K562 (cell line): ENCODE measurements at regions of chr12 and their contacts with region 1.

Region 1: GRCh38 chr12:120228291-120229070 is 27.6 kb upstream of the RPLP0 start:
- DNase-seq: peak; percentile 86 to 92 (median 86)
- ATAC-seq: peak; percentile 78
- H3K4me3 ChIP-seq: peak overlapping the region; percentile 2; the same call in 1 of the 2 replicates
- H3K27ac ChIP-seq: peak overlapping the region; percentile 96; the same call in 2 of the 3 replicates
- H3K4me1 ChIP-seq: peaks cover 74 to 80% of the 10 kb centered on the region in 2 experiments
- H3K27me3 ChIP-seq: no peaks in the 10 kb centered on the region
- CTCF ChIP-seq: peak; percentile 95 to 96 (median 95)
- EP300 ChIP-seq: peak; percentile 38
- POLR2A ChIP-seq: no peak
- RAD21 ChIP-seq: peak; percentile 98 to 99

Region 2: GRCh38 chr12:120075034-120075616 is 153.4 kb before region 1 on chr12:
- CTCF ChIA-PET with region 1: no interaction called
- POLR2A ChIA-PET with region 1: no interaction called
- in situ Hi-C with region 1: no loop called
- intact Hi-C with region 1: no loop called
- DNase-seq: no peak
- ATAC-seq: no peak
- H3K4me3 ChIP-seq: no peak overlapping the region
- H3K27ac ChIP-seq: no peak overlapping the region
- H3K4me1 ChIP-seq: no peaks in the 10 kb centered on the region; a peak in 1 of 5 replicates
- H3K27me3 ChIP-seq: peaks cover 40 to 72% of the 10 kb centered on the region in 2 experiments
- CTCF ChIP-seq: no peak
- EP300 ChIP-seq: no peak
- POLR2A ChIP-seq: no peak
- RAD21 ChIP-seq: no peak

Region 3: GRCh38 chr12:120242275-120242799 is 13.9 kb after region 1 on chr12:
- CTCF ChIA-PET with region 1: no interaction called
- POLR2A ChIA-PET with region 1: interaction called, 35 read pairs
- in situ Hi-C with region 1: no loop called
- intact Hi-C with region 1: loop called (anchors 1 kb)
- DNase-seq: peak; percentile 76 to 95 (median 86)
- ATAC-seq: peak; percentile 97
- H3K4me3 ChIP-seq: no peak overlapping the region
- H3K27ac ChIP-seq: no peak overlapping the region
- H3K4me1 ChIP-seq: peaks cover 30 to 31% of the 10 kb centered on the region in 2 experiments
- H3K27me3 ChIP-seq: no peaks in the 10 kb centered on the region
- CTCF ChIP-seq: no peak
- EP300 ChIP-seq: peak; percentile 85
- POLR2A ChIP-seq: no peak
- RAD21 ChIP-seq: peak in 1 of 2 experiments; percentile 37; a peak in 2 of 4 replicates

Region 4: DNA sequence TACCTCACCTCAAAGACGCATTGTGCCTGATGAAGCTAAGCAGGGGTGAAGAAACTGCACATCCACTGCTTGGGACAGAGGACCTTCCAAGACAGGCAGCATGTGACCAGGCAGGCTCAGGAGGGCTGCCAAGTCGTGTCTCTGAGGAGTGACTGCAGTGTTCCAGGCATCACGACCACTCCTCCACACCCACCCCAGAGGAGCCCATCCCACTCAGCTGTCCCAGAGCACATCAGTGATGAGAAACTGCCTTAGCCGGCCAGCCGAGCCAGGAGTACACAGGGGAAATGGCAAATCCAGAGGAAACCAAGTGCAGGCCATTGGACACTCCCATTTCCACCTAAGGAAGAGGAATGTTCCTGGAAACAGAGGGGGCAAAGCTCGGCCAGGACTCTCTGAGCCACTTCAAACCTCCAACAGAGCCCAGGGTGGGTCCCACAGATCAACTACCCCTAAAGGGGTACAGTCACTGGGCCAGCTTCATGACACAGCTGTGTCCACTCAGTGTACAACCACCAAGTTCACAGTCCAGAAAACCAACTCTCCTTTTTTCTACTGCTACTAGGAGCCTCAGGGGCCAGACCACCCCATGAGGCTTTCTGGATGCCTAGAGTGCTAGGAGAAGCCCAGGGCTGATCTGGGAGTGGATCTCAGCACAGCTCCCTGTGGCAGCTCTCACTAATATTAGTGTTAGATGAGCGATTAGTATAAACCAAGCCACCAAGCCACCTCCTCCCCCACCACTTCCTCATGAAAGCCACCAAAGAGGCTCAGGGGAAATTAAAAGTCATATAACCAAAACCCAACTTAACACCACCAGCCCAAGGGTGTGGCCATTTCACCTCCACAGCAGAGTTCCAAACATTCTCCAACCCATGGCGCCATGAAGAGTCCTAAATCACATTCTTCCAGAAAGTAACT is 21.7 kb after region 1 on chr12:
- CTCF ChIA-PET with region 1: no interaction called
- POLR2A ChIA-PET with region 1: interaction called, 35 read pairs
- in situ Hi-C with region 1: no loop called
- intact Hi-C with region 1: no loop called
- DNase-seq: no peak
- ATAC-seq: peak; percentile 16; the same call in 2 of the 3 replicates
- H3K4me3 ChIP-seq: no peak overlapping the region
- H3K27ac ChIP-seq: no peak overlapping the region
- H3K4me1 ChIP-seq: peaks cover 30 to 38% of the 10 kb centered on the region in 2 experiments
- H3K27me3 ChIP-seq: no peaks in the 10 kb centered on the region
- CTCF ChIP-seq: no peak
- EP300 ChIP-seq: no peak
- POLR2A ChIP-seq: no peak
- RAD21 ChIP-seq: no peak

Region 5: GRCh38 chr12:120265473-120266179 is 37.1 kb after region 1 on chr12 and contains the start of gene PXN:
- CTCF ChIA-PET with region 1: interaction called, 35 read pairs
- POLR2A ChIA-PET with region 1: interaction called, 39 read pairs
- in situ Hi-C with region 1: loop called (anchors 5 kb)
- intact Hi-C with region 1: loop called (anchors 1 kb)
- DNase-seq: peak; percentile 88 to 99 (median 98)
- ATAC-seq: peak; percentile 95
- H3K4me3 ChIP-seq: peak within 1 kb of the TSS; percentile 70
- H3K27ac ChIP-seq: peak within 1 kb of the TSS; percentile 76
- H3K4me1 ChIP-seq: peaks cover 37% of the 10 kb centered on the region in 2 experiments; a peak in 4 of 5 replicates
- H3K27me3 ChIP-seq: no peaks in the 10 kb centered on the region
- CTCF ChIP-seq: peak; percentile 68 to 92 (median 86)
- EP300 ChIP-seq: no peak
- POLR2A ChIP-seq: peak; percentile 60
- RAD21 ChIP-seq: peak; percentile 91 to 94
- polyA plus RNA-seq, gene PXN: 4.0 to 4.8 TPM

Region 6: GRCh38 chr12:120317224-120318105 is 89.0 kb after region 1 on chr12:
- CTCF ChIA-PET with region 1: no interaction called
- POLR2A ChIA-PET with region 1: interaction called, 4 read pairs
- in situ Hi-C with region 1: no loop called
- intact Hi-C with region 1: loop called (anchors 1 kb)
- DNase-seq: peak; percentile 99 to 100 (median 99)
- ATAC-seq: peak; percentile 99
- H3K4me3 ChIP-seq: peak overlapping the region; percentile 48
- H3K27ac ChIP-seq: peak overlapping the region; percentile 85
- H3K4me1 ChIP-seq: peaks cover 3 to 10% of the 10 kb centered on the region in 2 experiments; a peak in 4 of 5 replicates
- H3K27me3 ChIP-seq: no peaks in the 10 kb centered on the region
- CTCF ChIP-seq: peak; percentile 74 to 94 (median 85)
- EP300 ChIP-seq: no peak
- POLR2A ChIP-seq: peak; percentile 93
- RAD21 ChIP-seq: peak in 1 of 2 experiments; percentile 49; a peak in 2 of 4 replicates

Region 7: GRCh38 chr12:120356567-120357030 is 128.1 kb after region 1 on chr12:
- CTCF ChIA-PET with region 1: no interaction called
- POLR2A ChIA-PET with region 1: no interaction called
- in situ Hi-C with region 1: no loop called
- intact Hi-C with region 1: loop called (anchors 5 kb)
- DNase-seq: peak; percentile 89 to 96 (median 95)
- ATAC-seq: peak; percentile 97
- H3K4me3 ChIP-seq: no peak overlapping the region
- H3K27ac ChIP-seq: no peak overlapping the region
- H3K4me1 ChIP-seq: peaks cover 0 to 19% of the 10 kb centered on the region in 2 experiments; a peak in 3 of 5 replicates
- H3K27me3 ChIP-seq: peaks cover 15 to 45% of the 10 kb centered on the region in 2 experiments; a peak in 4 of 5 replicates
- CTCF ChIP-seq: peak; percentile 90 to 96 (median 95)
- EP300 ChIP-seq: 0 out of 2 replicates have a peak, but pooled peaks have one; percentile 21
- POLR2A ChIP-seq: no peak
- RAD21 ChIP-seq: peak; percentile 90 to 98

Region 8: DNA sequence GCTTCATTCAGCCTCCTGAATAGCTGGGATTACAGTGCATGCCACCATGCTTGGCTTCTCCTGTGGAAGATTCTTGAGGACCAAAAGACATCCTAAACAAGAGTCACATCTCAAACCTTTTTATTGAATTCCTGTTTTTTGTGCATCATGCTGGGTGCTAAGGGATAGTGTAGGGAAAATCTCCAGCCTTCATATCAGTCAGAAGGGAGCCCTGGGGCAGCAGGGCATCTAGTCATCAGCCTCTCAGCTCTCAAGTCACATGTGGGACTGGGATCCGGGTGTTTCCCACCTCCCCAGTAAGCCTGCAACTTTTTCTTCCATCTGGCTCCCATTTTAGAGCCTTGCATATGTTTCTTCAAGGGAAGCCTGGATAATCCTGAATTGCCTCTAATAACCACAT is 835.6 kb after region 1 on chr12:
- CTCF ChIA-PET with region 1: no interaction called
- POLR2A ChIA-PET with region 1: no interaction called
- in situ Hi-C with region 1: no loop called
- intact Hi-C with region 1: no loop called
- DNase-seq: no peak
- ATAC-seq: no peak
- H3K4me3 ChIP-seq: no peak overlapping the region
- H3K27ac ChIP-seq: no peak overlapping the region
- H3K4me1 ChIP-seq: no peaks in the 10 kb centered on the region; a peak in 1 of 5 replicates
- H3K27me3 ChIP-seq: peaks cover 18 to 22% of the 10 kb centered on the region in 2 experiments
- CTCF ChIP-seq: no peak
- EP300 ChIP-seq: no peak
- POLR2A ChIP-seq: no peak
- RAD21 ChIP-seq: no peak

Region 9: GRCh38 chr12:121405211-121405610 is 1176.7 kb after region 1 on chr12:
- CTCF ChIA-PET with region 1: no interaction called
- POLR2A ChIA-PET with region 1: no interaction called
- in situ Hi-C with region 1: no loop called
- intact Hi-C with region 1: no loop called
- DNase-seq: no peak
- ATAC-seq: no peak
- H3K4me3 ChIP-seq: no peak overlapping the region
- H3K27ac ChIP-seq: no peak overlapping the region
- H3K4me1 ChIP-seq: peaks cover 0 to 3% of the 10 kb centered on the region in 2 experiments; a peak in 3 of 5 replicates
- H3K27me3 ChIP-seq: no peaks in the 10 kb centered on the region
- CTCF ChIP-seq: no peak
- EP300 ChIP-seq: no peak
- POLR2A ChIP-seq: no peak
- RAD21 ChIP-seq: no peak